ENCODE measurements at regions of chr7 and their contacts with region 1.

Region 1: DNA sequence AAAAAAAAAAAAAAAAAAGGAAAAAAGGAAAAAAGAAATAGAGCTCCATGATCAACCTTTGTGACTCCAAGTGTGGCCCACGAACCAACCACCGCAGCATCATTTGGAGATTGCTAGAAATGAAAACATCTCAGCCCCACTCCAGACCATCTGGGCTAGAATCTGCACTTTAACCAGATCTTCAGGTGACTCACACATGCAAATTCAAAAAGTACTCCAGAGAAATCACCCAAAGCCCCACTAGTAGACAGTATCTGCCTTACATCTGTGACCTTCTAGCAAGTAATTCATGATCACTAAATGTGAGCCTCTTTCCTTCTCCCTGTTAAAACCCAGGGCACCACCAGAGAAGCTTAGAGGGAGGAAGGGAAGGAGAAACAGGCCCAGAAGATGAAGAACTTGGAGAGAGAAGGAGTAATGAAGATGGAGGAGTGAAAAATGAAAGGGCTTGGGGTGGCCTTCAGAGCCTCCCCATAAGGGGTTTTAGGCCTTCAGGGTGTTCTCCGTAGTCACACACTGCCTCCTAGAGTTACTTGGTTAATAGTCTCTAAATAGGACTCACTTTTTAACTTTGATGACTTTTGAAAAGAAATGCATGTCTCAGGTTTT is 94.0 kb downstream of the SLC37A3 start:
- DNase-seq: peak; percentile 39 to 67 (median 56)
- H3K4me3 ChIP-seq: no peak overlapping the region
- H3K4me3 Mint-ChIP-seq: no peak overlapping the region
- H3K27ac ChIP-seq: no peak overlapping the region
- H3K27ac Mint-ChIP-seq: peak overlapping the region in 5 of 7 donors; percentile 35 to 72 (median 63)
- H3K4me1 ChIP-seq: no peaks in the 10 kb centered on the region
- H3K4me1 Mint-ChIP-seq: peaks cover 4 to 7% (median 5%) of the 10 kb centered on the region in 4 donors
- H3K27me3 ChIP-seq: no peaks in the 10 kb centered on the region
- H3K27me3 Mint-ChIP-seq: peaks cover under 1% of the 10 kb centered on the region in 2 donors

Region 2: GRCh38 chr7:140121326-140121725 is 183.0 kb before region 1 on chr7:
- CTCF ChIA-PET with region 1: interaction called, 6 read pairs
- POLR2A ChIA-PET with region 1: no interaction called
- intact Hi-C with region 1: loop called (anchors 5 kb)
- DNase-seq: no peak
- H3K4me3 ChIP-seq: no peak overlapping the region
- H3K4me3 Mint-ChIP-seq: no peak overlapping the region
- H3K27ac ChIP-seq: no peak overlapping the region
- H3K27ac Mint-ChIP-seq: no peak overlapping the region
- H3K4me1 ChIP-seq: no peaks in the 10 kb centered on the region
- H3K4me1 Mint-ChIP-seq: peaks cover 0 to 5% (median 0%) of the 10 kb centered on the region in 4 donors
- H3K27me3 ChIP-seq: no peaks in the 10 kb centered on the region
- H3K27me3 Mint-ChIP-seq: no peaks in the 10 kb centered on the region

Region 3: DNA sequence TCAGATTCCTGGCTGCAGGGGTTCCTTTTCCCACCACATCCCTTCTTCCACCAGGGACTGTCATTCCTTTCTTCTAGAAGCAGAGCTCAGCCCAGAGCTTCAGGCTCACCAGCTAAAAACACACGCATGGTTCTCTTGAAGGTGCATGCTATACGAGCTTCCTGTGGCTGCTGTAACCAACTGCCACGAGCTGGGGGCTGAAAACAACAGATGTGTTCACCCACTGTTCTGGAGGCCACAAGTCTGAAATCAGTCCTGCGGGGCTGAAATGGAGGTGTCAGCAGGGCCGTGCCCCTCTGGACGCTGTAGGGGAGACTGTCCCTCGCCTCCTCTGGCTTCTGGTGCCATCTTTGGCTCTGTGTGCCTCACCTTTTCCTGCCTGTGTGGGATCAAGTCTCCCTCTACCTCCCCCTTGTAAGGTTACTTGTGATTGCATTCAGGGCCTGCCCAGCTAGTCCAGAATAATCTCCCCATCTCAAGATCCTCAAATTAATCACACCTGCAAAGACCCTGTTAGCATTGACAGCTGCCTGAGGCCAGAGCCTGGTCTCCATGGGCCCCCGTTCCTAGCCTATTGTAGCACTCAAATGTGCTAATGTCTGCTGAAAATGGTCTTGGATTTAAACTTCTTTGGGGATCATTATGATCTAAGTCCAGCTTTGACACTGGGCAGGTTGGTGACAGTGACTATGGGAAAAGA is 113.3 kb after region 1 on chr7:
- CTCF ChIA-PET with region 1: no interaction called
- POLR2A ChIA-PET with region 1: no interaction called
- intact Hi-C with region 1: no loop called
- DNase-seq: no peak
- H3K4me3 ChIP-seq: no peak overlapping the region
- H3K4me3 Mint-ChIP-seq: no peak overlapping the region
- H3K27ac ChIP-seq: no peak overlapping the region
- H3K27ac Mint-ChIP-seq: peak overlapping the region in 1 of 7 donors; percentile 10
- H3K4me1 ChIP-seq: no peaks in the 10 kb centered on the region
- H3K4me1 Mint-ChIP-seq: no peaks in the 10 kb centered on the region
- H3K27me3 ChIP-seq: no peaks in the 10 kb centered on the region
- H3K27me3 Mint-ChIP-seq: no peaks in the 10 kb centered on the region

Region 4: DNA sequence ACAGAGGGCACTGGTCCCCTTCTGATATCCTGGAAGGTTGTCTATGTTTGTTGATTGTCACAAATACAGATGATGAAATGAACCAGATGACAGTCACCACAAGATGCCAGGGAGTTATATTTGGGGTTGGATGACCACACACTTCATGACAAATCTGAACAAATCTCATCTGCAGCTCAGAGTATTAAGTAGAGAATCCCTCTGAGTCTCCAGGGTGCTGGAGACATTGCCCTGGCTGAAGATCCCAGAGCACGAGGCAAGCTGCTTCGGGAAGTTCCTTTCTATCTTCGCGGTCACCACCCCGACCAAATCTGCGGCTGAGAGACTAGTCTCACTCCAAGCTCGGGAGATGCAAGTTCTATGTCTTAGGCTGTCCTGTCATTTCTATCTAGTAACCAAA is 327.3 kb after region 1 on chr7:
- CTCF ChIA-PET with region 1: no interaction called
- POLR2A ChIA-PET with region 1: no interaction called
- intact Hi-C with region 1: no loop called
- DNase-seq: no peak
- H3K4me3 ChIP-seq: no peak overlapping the region
- H3K4me3 Mint-ChIP-seq: no peak overlapping the region
- H3K27ac ChIP-seq: no peak overlapping the region
- H3K27ac Mint-ChIP-seq: no peak overlapping the region
- H3K4me1 ChIP-seq: no peaks in the 10 kb centered on the region
- H3K4me1 Mint-ChIP-seq: peaks cover 0 to 2% (median 0%) of the 10 kb centered on the region in 4 donors
- H3K27me3 ChIP-seq: no peaks in the 10 kb centered on the region
- H3K27me3 Mint-ChIP-seq: peaks cover 7 to 25% of the 10 kb centered on the region in 2 donors

Measured in CD4-positive, alpha-beta memory T cell (primary cell).